PC-9 (cell line): ENCODE measurements at regions of chr9 and their contacts with region 1.

Region 1: DNA sequence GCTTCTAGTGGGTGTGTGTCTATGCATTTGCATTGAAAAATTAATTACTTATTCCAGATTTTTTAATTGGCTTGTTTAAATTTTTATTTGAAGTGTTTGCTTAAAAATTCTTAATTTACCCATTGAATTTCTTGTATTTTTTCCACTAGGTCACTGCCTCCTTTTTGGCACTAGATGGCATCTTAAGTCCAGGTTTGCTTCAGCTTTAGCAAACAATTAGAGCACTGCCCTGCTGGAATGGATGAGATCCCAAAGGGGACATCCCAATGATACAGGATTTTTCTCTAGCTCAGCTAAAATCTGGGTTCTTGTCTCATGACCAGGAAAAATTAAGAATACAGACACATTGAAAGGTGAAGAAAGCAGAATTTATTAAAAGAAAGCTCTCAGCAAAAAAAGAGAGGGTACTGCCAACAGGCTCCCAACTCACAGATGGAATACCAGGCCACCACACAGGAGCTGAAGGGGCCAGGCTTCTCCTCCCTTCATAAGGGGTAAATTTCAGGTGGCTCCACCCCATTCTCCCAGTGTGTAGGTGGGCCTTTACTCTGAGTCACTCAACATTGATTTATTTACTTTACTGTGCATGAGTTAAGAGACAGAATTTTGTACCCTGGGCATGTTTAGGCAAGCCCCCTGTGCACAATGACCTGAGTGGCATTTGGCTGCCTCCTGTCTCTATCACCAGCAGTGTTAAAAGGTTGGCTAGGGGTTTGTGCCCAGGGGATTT is 532.4 kb downstream of the ANXA1 start:
- DNase-seq: peak in 1 of 2 experiments; percentile 41
- H3K4me3 ChIP-seq: no peak overlapping the region
- H3K27ac ChIP-seq: 0 out of 2 replicates have a peak overlapping the region, but pooled peaks have one; percentile 4
- H3K4me1 ChIP-seq: peaks cover 10% of the 10 kb centered on the region
- H3K27me3 ChIP-seq: no peaks in the 10 kb centered on the region
- CTCF ChIP-seq: peak; percentile 87

Region 2: DNA sequence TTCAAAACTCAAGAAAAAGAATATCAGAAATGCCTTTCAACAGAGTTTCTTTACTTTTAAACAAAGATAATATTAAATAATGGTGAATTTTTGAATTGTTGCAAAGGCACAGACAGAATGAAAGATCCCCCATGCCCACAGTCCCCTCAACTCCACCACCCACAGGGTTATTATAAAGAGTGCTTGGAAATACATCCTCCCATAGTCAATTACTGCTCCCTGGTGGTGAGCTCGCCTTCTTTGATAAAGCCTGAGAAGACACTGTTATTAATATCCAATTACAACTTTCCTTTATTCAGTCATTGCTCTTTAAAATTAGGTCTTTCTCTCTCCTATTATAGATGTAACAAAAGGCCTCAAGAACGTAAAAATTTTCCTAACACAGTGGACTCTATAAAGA is 322.9 kb after region 1 on chr9:
- CTCF ChIA-PET with region 1: no interaction called
- POLR2A ChIA-PET with region 1: no interaction called
- intact Hi-C with region 1: loop called (anchors 5 kb)
- DNase-seq: no peak
- H3K4me3 ChIP-seq: no peak overlapping the region
- H3K27ac ChIP-seq: no peak overlapping the region
- H3K4me1 ChIP-seq: no peaks in the 10 kb centered on the region
- H3K27me3 ChIP-seq: no peaks in the 10 kb centered on the region
- CTCF ChIP-seq: peak; percentile 43

Region 3: DNA sequence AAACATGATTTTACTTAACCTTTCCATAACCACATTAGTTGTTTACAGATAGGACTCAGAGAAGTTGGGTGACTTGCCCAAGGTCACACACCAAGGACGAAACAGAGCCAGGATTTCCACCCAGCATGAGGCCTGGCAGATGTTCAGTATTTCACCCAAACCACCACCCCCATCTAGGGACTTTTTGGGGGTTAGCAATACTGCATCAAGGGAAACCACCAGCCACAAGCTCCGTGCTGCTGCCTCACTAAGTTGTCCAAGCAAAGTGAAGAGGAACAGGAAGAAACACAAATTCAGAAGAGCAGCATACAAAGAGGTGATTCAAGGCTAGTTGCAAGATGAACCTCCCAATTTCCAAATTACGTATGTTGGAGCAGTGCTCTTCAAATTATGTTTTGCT is 593.5 kb after region 1 on chr9:
- CTCF ChIA-PET with region 1: no interaction called
- POLR2A ChIA-PET with region 1: no interaction called
- intact Hi-C with region 1: loop called (anchors 10 kb)
- DNase-seq: no peak
- H3K4me3 ChIP-seq: no peak overlapping the region
- H3K27ac ChIP-seq: no peak overlapping the region
- H3K4me1 ChIP-seq: no peaks in the 10 kb centered on the region
- H3K27me3 ChIP-seq: no peaks in the 10 kb centered on the region
- CTCF ChIP-seq: no peak

Region 4: DNA sequence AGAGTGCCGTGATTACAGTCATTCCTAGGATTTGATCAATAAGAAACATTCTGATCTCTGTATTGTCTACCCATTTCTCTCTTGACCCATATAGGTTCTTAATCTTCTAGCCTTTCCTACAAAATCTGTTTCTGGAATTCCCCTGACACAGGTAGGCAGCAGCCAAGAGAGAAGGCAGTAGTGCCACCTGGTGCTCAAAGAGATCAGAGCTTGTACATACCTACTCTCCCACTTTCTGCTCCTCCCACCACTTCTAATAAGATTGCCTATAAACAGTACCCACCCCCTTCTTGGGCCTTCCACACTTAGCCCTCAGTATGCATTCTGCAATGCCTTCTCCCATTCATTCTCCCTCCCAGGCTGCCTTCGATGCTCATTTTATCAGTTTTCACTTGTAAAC is 695.7 kb after region 1 on chr9:
- CTCF ChIA-PET with region 1: interaction called, 4 read pairs
- POLR2A ChIA-PET with region 1: no interaction called
- intact Hi-C with region 1: loop called (anchors 1 kb)
- DNase-seq: peak in 1 of 2 experiments; percentile 16
- H3K4me3 ChIP-seq: no peak overlapping the region
- H3K27ac ChIP-seq: no peak overlapping the region
- H3K4me1 ChIP-seq: no peaks in the 10 kb centered on the region
- H3K27me3 ChIP-seq: no peaks in the 10 kb centered on the region
- CTCF ChIP-seq: peak; percentile 62

Region 5: DNA sequence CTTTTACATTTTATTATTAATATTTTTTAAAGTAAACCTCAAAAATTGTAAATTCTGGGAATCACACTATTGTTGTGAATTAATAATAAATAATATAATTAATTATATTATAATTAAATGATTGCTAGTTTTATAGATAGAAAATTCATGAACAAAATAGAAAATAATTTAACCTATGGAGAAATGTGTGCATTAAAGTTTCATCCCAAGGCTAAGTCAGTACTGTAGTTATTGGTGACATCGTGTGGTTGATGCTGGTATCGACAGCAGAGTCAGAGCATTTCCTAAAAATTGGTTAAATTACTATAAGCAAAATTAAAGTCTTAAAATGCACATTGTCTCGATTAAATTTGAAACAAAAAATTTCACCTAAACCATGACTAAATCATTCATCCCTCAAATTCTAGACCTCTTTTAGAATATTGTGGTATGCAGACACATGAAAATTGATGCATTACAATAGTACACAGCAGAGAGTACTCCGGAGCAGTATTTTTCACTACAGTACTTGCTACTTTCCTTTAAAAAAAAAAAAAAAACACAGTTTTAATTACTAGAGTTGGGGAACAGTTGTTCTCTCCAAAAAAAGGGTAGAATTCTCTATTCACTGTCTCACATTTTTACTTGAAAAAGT is 887.0 kb after region 1 on chr9:
- CTCF ChIA-PET with region 1: interaction called, 3 read pairs
- POLR2A ChIA-PET with region 1: no interaction called
- intact Hi-C with region 1: loop called (anchors 1 kb)
- DNase-seq: peak in 1 of 2 experiments; percentile 10
- H3K4me3 ChIP-seq: no peak overlapping the region
- H3K27ac ChIP-seq: no peak overlapping the region
- H3K4me1 ChIP-seq: no peaks in the 10 kb centered on the region
- H3K27me3 ChIP-seq: no peaks in the 10 kb centered on the region
- CTCF ChIP-seq: peak; percentile 78

Region 6: DNA sequence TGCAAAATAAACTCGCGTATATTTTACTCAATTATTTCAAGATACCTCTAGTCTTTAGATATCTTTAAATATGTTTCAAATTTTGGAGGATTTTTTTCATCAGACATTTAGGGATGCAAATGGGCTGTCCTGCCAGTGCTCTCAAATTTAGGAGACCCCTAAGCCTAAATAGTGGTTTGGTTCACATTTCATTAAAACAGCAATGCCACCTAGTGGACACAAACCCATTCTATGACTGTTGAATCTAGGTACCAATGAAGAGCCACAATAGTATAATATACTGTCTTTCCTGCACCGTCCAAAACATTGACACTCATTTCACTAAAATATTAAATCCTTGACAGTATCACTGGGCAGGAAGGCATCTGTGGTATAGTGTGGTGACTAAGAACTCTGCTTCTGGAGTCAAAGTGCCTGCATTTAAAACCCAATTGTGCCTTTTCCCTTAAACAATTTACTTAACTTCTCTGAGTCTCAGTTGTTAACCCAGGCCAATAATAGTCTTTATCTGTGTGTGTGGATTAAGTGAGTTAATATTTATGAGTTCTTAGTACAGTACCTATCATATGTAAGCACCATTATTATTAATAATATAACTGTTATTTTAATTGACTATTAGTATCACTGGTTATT is 961.1 kb after region 1 on chr9:
- CTCF ChIA-PET with region 1: no interaction called
- POLR2A ChIA-PET with region 1: no interaction called
- intact Hi-C with region 1: loop called (anchors 10 kb)
- DNase-seq: no peak
- H3K4me3 ChIP-seq: no peak overlapping the region
- H3K27ac ChIP-seq: no peak overlapping the region
- H3K4me1 ChIP-seq: no peaks in the 10 kb centered on the region
- H3K27me3 ChIP-seq: no peaks in the 10 kb centered on the region
- CTCF ChIP-seq: peak; percentile 71

Region 7: DNA sequence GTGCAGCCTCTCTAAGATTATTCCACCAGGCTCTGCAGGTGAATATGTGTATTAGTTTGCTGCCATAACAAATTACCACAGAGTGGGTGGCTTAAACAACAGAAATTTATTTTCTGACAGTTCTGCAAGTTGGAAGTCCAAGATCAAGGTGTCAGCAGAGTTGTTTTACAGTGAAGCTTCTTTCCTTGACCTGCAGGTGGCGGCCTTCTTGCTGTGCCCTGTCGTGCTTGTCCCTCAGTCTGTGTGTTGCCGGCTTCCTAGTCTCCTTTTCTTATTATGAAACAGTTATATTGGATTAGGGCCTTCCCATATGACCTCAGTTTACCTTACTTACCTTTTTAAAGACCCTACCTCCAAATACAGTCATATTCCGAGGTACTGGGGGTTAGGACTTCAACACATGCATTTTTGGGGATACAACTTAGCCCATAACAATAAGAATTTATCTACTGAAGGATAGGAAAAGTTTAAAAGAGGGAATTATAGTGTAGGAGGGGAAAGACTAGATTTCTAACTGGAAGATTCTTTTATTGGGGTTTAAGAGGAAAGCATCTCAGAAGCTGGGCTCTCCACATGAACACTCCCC is 1501.7 kb after region 1 on chr9:
- CTCF ChIA-PET with region 1: no interaction called
- POLR2A ChIA-PET with region 1: no interaction called
- intact Hi-C with region 1: loop called (anchors 10 kb)
- DNase-seq: peak in 1 of 2 experiments; percentile 25
- H3K4me3 ChIP-seq: no peak overlapping the region
- H3K27ac ChIP-seq: no peak overlapping the region
- H3K4me1 ChIP-seq: peaks cover 14% of the 10 kb centered on the region
- H3K27me3 ChIP-seq: no peaks in the 10 kb centered on the region
- CTCF ChIP-seq: peak; percentile 63